MCF 10A (cell line): ENCODE measurements at regions of chr18 and their contacts with region 1.

Region 1: GRCh38 chr18:10519999-10520935 is 5.6 kb upstream of the NAPG start:
- DNase-seq: peak; percentile 90
- H3K4me3 Mint-ChIP-seq: no peak overlapping the region
- H3K27ac Mint-ChIP-seq: no peak overlapping the region
- H3K4me1 Mint-ChIP-seq: no peaks in the 10 kb centered on the region
- H3K27me3 Mint-ChIP-seq: no peaks in the 10 kb centered on the region
- CTCF ChIP-seq: peak; percentile 83

Region 2: DNA sequence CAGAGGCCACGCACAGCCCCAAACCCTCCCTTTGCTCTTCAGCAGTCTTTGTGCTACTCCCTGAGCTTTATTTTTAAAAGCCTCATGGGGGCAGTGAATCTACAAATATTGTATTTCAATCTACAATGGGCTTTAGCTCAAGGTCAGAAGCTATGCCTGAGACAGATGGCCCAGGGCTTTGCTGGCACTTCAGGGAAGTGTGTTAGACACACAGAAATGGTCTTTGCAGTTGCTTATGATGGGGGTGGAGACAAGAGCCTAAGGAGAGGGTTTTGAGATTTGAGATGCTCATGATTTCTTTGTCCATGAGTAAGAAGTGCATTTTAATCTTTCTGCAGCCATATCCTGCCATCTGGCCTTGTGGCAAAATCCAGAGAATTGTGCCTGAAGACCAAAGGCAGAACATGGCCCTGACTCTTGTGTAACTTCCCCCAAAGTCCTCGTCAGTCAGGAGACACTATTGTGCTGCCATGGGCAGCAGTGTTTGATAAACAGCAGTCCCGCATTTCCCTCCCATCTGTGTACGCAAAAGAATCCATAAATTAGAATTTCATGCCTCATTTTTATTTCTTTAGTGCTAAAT is 513.9 kb before region 1 on chr18:
- CTCF ChIA-PET with region 1: interaction called, 22 read pairs
- POLR2A ChIA-PET with region 1: interaction called, 8 read pairs
- intact Hi-C with region 1: loop called (anchors 1 kb)
- DNase-seq: peak; percentile 27
- H3K4me3 Mint-ChIP-seq: no peak overlapping the region
- H3K27ac Mint-ChIP-seq: no peak overlapping the region
- H3K4me1 Mint-ChIP-seq: no peaks in the 10 kb centered on the region
- H3K27me3 Mint-ChIP-seq: no peaks in the 10 kb centered on the region
- CTCF ChIP-seq: peak; percentile 16

Region 3: DNA sequence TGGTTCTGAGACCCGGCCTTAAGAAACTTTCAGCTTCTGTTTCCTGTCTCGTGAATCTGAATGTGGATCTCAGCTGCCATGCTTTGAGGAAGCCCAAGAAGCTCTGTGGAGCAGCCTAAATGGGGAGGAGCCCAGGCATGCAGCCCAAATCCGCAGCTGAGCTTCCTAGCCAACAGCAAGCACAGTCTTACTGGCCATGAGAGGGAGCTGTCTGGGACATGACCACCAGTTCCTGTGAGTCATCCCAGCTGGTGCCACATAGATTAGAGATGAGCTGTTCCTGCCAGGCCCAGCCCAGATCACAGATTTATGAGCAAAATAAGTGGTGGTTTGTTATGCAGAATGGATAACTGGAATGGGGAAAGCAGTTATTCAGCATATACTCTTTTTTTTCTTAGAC is 290.2 kb before region 1 on chr18:
- CTCF ChIA-PET with region 1: no interaction called
- POLR2A ChIA-PET with region 1: no interaction called
- intact Hi-C with region 1: loop called (anchors 1 kb)
- DNase-seq: peak; percentile 62
- H3K4me3 Mint-ChIP-seq: no peak overlapping the region
- H3K27ac Mint-ChIP-seq: no peak overlapping the region
- H3K4me1 Mint-ChIP-seq: peaks cover 14% of the 10 kb centered on the region
- H3K27me3 Mint-ChIP-seq: no peaks in the 10 kb centered on the region
- CTCF ChIP-seq: peak; percentile 6